ENCODE measurements at regions of chr6 and their contacts with region 1.

Region 1: DNA sequence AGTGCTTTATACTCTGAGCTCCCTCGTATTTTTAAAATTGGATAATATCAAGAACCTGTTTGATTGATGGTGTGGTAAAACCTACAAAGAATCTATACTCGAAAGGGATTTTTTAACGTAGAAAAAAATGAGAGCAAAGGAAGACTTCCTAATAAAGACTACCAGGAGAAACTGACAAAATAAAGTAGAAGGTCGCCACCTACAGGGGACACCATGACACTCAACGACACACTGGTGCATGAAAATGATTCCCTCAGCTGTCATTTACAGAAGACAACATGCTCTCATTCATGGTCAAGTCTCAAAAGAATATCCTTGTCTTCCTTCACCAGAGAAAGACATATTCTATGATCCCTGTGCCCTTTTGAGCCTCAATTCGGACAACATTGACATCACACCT is 10.1 kb upstream of the NHSL1 start:
- DNase-seq: peak; percentile 30 to 48 (median 43)
- H3K4me3 ChIP-seq: no peak overlapping the region
- H3K4me3 Mint-ChIP-seq: no peak overlapping the region
- H3K27ac ChIP-seq: no peak overlapping the region
- H3K27ac Mint-ChIP-seq: no peak overlapping the region
- H3K4me1 ChIP-seq: peaks cover under 1% of the 10 kb centered on the region
- H3K4me1 Mint-ChIP-seq: peaks cover 0 to 4% (median under 1%) of the 10 kb centered on the region in 4 donors
- H3K27me3 ChIP-seq: no peaks in the 10 kb centered on the region
- H3K27me3 Mint-ChIP-seq: peaks cover 0 to 1% of the 10 kb centered on the region in 2 donors

Region 2: DNA sequence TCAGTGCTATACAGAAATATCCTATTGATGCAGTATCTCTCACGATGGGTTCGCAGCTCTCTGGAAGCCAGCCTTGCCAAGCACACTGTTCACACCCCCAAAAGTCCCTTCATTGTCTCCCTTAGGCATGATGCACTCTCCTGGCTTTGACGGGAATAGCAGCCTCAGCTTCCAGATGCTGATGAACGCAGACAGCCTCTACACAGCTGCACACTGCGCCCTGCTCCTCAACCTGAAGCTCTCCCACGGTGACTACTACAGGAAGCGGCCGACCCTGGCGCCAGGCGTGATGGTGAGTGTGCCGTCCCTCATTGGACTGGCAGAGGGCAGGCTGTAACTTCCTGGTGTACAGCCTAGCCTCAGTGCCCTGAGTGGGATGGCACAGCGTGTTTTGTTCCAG is 231.0 kb before region 1 on chr6:
- CTCF ChIA-PET with region 1: no interaction called
- POLR2A ChIA-PET with region 1: no interaction called
- intact Hi-C with region 1: no loop called
- DNase-seq: no peak
- H3K4me3 ChIP-seq: no peak overlapping the region
- H3K4me3 Mint-ChIP-seq: no peak overlapping the region
- H3K27ac ChIP-seq: no peak overlapping the region
- H3K27ac Mint-ChIP-seq: no peak overlapping the region
- H3K4me1 ChIP-seq: no peaks in the 10 kb centered on the region
- H3K4me1 Mint-ChIP-seq: no peaks in the 10 kb centered on the region
- H3K27me3 ChIP-seq: no peaks in the 10 kb centered on the region
- H3K27me3 Mint-ChIP-seq: no peaks in the 10 kb centered on the region

Region 3: DNA sequence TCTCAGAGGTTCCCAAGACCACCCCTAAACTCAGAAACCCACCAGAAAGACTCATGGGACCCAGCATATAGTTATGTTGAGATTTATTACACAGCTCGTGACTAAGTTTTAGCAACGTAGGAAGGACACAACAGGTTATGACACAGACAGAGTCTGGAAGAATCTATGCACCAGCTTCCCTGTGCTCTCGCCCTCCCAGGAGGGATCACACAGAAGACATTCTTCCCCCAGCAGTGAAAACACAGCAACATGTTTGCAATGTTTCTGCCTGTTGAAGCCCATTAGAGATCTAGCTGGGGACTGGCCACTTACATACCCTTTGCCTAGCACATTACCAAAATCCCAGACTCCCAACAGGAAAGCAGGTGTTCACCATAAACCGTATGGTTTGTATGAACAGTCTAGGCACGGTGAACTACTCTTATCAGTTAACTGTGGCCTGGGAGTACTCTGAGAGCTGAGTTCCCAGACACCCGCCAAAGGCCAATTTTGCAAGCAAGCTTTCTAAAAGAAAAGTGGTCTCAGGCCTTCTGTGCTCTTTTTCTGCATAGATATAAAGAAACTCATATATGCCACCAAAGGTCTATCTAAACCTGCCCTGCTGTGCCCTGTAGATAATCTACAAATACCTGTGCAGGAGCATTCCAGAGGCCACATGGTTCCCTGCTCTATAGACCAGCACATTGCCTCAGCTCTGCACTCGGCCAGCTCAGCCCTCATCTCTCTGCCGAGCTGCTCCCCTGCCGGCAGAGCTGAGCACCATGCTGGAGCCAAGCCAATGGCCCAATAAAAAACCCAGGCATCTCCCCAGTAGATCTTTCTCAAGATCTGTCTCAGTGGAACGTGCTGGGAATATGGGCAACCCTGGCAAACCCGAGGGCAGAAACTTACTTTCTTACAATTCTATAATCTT is 201.3 kb before region 1 on chr6:
- CTCF ChIA-PET with region 1: no interaction called
- POLR2A ChIA-PET with region 1: no interaction called
- intact Hi-C with region 1: no loop called
- DNase-seq: no peak
- H3K4me3 ChIP-seq: no peak overlapping the region
- H3K4me3 Mint-ChIP-seq: no peak overlapping the region
- H3K27ac ChIP-seq: no peak overlapping the region
- H3K27ac Mint-ChIP-seq: no peak overlapping the region
- H3K4me1 ChIP-seq: no peaks in the 10 kb centered on the region
- H3K4me1 Mint-ChIP-seq: no peaks in the 10 kb centered on the region
- H3K27me3 ChIP-seq: no peaks in the 10 kb centered on the region
- H3K27me3 Mint-ChIP-seq: peaks cover 0 to 4% of the 10 kb centered on the region in 2 donors

Region 4: GRCh38 chr6:138372711-138373463 is 136.5 kb before region 1 on chr6:
- CTCF ChIA-PET with region 1: interaction called, 3 read pairs
- POLR2A ChIA-PET with region 1: no interaction called
- intact Hi-C with region 1: loop called (anchors 1 kb)
- DNase-seq: peak in 3 of 5 donors; percentile 2 to 21 (median 5)
- H3K4me3 ChIP-seq: no peak overlapping the region
- H3K4me3 Mint-ChIP-seq: no peak overlapping the region
- H3K27ac ChIP-seq: no peak overlapping the region
- H3K27ac Mint-ChIP-seq: no peak overlapping the region
- H3K4me1 ChIP-seq: no peaks in the 10 kb centered on the region
- H3K4me1 Mint-ChIP-seq: peaks cover 0 to 2% (median 0%) of the 10 kb centered on the region in 4 donors
- H3K27me3 ChIP-seq: no peaks in the 10 kb centered on the region
- H3K27me3 Mint-ChIP-seq: peaks cover 2 to 4% of the 10 kb centered on the region in 2 donors

Region 5: GRCh38 chr6:138434925-138435324 is 74.4 kb before region 1 on chr6:
- CTCF ChIA-PET with region 1: interaction called, 265 read pairs
- POLR2A ChIA-PET with region 1: interaction called, 7 read pairs
- intact Hi-C with region 1: no loop called
- DNase-seq: no peak
- H3K4me3 ChIP-seq: no peak overlapping the region
- H3K4me3 Mint-ChIP-seq: no peak overlapping the region
- H3K27ac ChIP-seq: no peak overlapping the region
- H3K27ac Mint-ChIP-seq: peak overlapping the region in 1 of 7 donors; percentile 65
- H3K4me1 ChIP-seq: no peaks in the 10 kb centered on the region
- H3K4me1 Mint-ChIP-seq: no peaks in the 10 kb centered on the region
- H3K27me3 ChIP-seq: no peaks in the 10 kb centered on the region
- H3K27me3 Mint-ChIP-seq: peaks cover 0 to 1% of the 10 kb centered on the region in 2 donors

Region 6: GRCh38 chr6:138455746-138456400 is 53.5 kb before region 1 on chr6:
- CTCF ChIA-PET with region 1: interaction called, 21 read pairs
- POLR2A ChIA-PET with region 1: interaction called, 5 read pairs
- intact Hi-C with region 1: loop called (anchors 2 kb)
- DNase-seq: peak; percentile 57 to 81 (median 74)
- H3K4me3 ChIP-seq: peak overlapping the region; percentile 12 to 47
- H3K4me3 Mint-ChIP-seq: peak overlapping the region; percentile 57 to 87 (median 72)
- H3K27ac ChIP-seq: peak overlapping the region; percentile 41
- H3K27ac Mint-ChIP-seq: peak overlapping the region; percentile 85 to 96 (median 89)
- H3K4me1 ChIP-seq: peaks cover 26% of the 10 kb centered on the region
- H3K4me1 Mint-ChIP-seq: peaks cover 13 to 37% (median 24%) of the 10 kb centered on the region in 4 donors
- H3K27me3 ChIP-seq: no peaks in the 10 kb centered on the region
- H3K27me3 Mint-ChIP-seq: no peaks in the 10 kb centered on the region

Region 7: DNA sequence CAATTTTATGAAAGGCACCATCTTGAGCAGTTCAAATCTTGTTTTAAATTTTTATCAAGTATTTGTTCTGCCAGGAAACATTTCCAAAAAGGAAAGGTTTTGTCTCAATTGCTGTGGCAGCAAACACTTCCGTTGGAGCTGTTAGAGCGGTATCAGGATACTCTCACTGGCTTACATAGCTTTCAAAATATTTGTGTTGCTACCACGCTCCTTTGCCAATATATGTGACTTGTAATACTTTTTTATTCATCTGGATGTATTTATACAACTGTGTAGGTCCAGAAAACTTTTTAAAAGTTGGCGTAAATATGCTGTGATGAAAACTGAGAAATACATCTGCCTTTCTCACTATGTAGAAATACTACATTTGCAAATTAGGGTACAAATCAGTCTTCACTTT is 27.7 kb after region 1 on chr6:
- CTCF ChIA-PET with region 1: no interaction called
- POLR2A ChIA-PET with region 1: no interaction called
- intact Hi-C with region 1: no loop called
- DNase-seq: no peak
- H3K4me3 ChIP-seq: no peak overlapping the region
- H3K4me3 Mint-ChIP-seq: no peak overlapping the region
- H3K27ac ChIP-seq: no peak overlapping the region
- H3K27ac Mint-ChIP-seq: no peak overlapping the region
- H3K4me1 ChIP-seq: no peaks in the 10 kb centered on the region
- H3K4me1 Mint-ChIP-seq: no peaks in the 10 kb centered on the region
- H3K27me3 ChIP-seq: no peaks in the 10 kb centered on the region
- H3K27me3 Mint-ChIP-seq: peaks cover 13 to 18% of the 10 kb centered on the region in 2 donors

Region 8: DNA sequence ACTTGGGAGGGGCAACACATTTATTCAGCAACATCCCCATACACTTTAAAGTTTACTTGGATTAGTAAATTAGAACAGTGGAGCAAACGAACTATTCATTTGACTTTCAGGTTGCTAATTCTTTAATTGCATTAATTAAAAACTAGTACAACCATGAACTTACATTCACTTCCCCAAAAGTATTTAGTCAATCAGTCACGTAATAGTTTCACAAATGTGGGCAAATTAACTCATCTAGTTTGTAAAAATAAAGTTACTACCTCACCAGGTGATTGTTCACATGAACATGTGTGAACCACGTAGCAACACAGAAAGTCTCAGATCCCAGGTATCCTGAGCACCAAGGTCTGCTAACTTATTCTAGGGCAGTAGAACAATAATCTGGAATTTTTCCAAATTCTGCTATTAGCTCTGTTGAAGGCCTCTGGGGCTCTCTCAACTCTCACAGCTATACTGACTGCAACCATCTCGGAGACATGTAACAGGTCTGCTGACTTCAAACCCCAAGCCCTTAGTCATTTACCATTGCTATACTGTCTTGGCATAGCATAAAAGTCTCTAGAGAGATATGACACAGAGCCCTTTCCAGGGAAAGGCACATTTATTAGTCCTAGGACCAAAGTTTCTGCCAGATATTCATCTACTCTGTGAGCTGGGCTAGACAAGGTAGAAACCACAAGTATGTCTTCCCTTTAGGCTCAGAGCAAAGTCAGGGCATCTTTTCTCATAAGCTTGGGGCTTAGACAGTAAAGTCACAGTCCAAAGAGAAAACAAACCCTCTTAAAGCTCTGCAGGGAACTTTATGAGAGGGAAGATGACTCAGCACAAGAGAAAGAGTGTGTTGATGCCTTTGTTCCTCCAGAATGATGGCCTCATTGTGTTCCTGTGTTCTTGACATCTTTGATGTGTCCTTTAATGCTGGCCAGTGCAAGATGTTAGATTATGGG is 213.3 kb after region 1 on chr6:
- CTCF ChIA-PET with region 1: no interaction called
- POLR2A ChIA-PET with region 1: no interaction called
- intact Hi-C with region 1: no loop called
- DNase-seq: no peak
- H3K4me3 ChIP-seq: no peak overlapping the region
- H3K4me3 Mint-ChIP-seq: no peak overlapping the region
- H3K27ac ChIP-seq: no peak overlapping the region
- H3K27ac Mint-ChIP-seq: no peak overlapping the region
- H3K4me1 ChIP-seq: no peaks in the 10 kb centered on the region
- H3K4me1 Mint-ChIP-seq: peaks cover 0 to 3% (median 0%) of the 10 kb centered on the region in 4 donors
- H3K27me3 ChIP-seq: no peaks in the 10 kb centered on the region
- H3K27me3 Mint-ChIP-seq: peaks cover 0 to 3% of the 10 kb centered on the region in 2 donors